ENCODE measurements at regions of chr19 and their contacts with region 1.

Region 1: DNA sequence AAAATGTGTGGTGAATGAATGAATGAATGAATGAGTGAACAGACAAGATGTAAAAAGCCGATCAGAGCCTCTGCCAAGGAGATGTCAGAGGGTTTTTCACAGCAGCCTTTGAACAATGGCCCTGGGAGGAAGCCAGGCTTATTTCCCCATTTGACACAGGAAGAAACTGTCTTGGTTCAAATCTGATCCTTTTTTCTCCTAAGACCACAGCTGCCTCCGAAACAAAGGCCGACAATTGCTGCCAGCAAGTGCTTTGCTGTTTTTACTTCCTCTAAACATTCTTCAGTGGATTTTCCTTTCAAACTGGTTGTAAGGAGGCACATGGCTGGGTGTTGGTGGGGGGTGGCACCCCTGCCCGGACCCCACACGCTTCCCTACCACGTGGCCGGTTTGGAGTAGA is 44.2 kb upstream of the HOMER3 start:
- DNase-seq: no peak
- ATAC-seq: peak; percentile 51

Region 2: DNA sequence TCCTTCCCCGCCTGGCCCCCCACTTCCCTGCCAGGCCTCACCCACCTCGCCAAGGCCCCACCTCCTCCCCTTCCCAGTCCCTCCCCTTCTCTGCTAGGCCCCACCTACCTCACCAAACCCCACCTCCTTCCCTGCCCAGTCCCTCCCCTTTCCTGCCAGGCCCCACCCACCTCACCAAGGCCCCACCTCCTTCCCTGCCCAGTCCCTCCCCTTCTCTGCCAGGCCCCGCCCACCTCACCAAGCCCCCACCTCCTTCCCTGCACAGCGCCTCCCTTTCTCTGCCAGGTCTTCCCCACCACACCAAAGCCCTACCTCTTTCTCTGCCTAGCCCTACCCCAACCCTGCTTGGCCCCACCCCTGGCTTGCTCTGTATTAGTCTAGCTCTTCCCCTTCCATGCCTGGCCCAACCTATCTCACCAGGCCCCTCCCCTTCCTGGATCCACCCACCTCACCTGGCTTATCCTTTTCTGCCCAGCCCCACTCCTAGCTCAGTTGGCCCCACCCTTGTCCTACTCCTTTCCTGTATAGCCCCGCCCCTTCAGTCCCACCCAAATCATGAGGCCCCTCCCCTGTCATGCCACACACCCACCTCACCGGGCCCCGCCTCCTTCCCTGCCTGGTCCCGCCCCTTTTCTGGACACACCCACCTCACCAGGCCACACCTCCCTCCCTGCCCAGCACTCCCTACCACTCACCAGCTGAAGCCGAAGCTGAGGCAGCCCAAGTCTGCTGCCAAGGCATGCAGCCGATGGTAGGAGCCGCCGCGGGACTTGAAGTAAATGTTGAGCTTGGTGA is 105.5 kb before region 1 on chr19:
- intact Hi-C with region 1: no loop called
- DNase-seq: no peak
- ATAC-seq: peak; percentile 27

Region 3: DNA sequence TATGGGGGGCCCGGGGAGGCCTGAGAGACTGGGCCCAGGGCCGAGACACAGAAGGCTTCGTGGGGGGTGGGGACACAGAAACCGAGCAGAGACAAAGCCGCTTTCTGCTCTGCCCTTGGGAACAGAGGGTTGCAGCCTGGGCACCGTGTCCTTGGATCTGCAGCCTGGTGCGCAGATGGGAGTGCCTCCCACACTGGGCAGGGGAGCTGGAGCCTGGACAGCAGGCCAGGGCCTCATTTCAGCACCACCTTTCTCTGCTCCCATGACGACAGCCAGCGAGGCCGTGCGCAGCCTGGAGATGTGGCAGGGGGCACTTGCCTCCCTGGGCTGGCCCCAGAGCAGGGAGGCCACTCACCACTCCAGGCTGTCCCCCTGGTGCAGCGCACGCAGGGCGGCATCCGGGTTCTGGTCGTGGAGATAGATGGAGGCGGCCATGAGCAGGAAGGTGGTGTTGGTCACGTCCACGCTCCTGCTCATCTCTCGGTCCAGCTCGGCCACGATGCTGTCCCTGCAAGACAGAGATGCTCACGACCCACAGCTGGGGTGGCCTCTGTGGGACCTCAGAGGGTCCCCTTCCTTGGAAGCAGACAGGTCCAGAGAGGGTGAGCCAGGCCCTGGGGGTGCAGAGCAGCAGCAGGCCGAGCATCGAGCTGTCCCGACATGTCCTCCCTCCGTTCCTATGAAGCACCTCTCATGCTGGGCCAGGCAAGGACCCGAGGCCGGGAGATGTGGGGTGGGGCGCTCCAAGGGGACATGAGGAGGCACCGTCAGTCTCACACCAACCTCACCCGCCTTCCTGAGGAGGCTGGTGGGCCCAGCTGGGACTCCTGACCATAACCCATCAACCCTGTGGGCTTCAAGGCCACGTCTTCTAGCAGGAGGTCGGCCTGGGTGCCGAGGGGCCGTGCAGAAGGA is 78.4 kb before region 1 on chr19:
- intact Hi-C with region 1: loop called (anchors 10 kb)
- DNase-seq: no peak
- ATAC-seq: no peak

Region 4: GRCh38 chr19:19040417-19040816 is 55.2 kb after region 1 on chr19:
- intact Hi-C with region 1: no loop called
- DNase-seq: peak; percentile 70
- ATAC-seq: peak; percentile 79